ENCODE measurements at regions of chr7 and their contacts with region 1.

Region 1: GRCh38 chr7:28926871-28927597 is 31.1 kb downstream of the TRIL start:
- DNase-seq: peak in 8 of 10 donors; percentile 36 to 74 (median 57)
- H3K4me3 ChIP-seq: peak overlapping the region; percentile 32 to 84 (median 62)
- H3K27ac ChIP-seq: peak overlapping the region in 7 of 59 donors; percentile 18 to 67 (median 49)
- H3K27me3 ChIP-seq: no peaks in the 10 kb centered on the region
- CTCF ChIP-seq: peak; percentile 78 to 98 (median 91)

Region 2: DNA sequence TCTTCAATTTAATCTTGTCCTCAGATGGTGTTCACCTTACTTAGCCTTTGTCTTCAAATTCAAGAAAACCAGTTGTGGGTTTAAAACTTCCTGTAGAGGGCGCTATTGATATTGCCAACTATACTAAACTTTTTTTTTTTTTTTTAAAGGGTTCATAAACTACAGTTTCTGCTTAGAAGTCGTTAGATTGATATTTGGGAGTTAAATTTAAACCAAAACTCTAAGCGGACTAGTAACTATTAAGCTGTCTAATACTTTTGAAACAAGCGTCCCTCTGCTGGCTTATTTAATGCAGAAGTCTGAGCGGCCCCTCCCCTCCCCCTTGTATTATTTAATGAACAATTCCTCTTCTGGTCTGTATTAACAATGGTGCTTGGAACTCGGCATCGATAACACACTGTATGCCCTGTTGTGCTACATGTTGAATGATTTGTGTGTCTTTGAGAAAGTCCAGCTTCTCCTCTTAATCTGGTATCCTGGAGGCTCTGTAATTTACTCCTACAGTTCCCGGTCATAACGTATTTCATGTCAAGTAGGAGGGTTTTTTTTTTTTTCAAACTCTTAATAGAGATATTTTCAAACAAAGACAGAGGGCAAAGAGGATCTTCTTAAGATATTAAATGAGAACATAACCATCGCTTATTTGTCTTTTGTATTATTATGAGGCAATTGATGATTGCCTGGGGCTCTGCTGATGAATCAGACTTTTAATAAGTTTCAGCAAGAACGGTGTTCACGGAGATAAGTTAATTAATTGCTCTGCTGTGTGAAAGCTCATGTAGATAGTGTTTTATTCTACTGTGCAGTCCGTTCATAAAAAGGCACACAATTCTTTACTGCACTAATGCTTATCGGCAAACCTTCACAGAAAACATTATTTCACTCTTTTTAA is 537.3 kb before region 1 on chr7:
- intact Hi-C with region 1: loop called in 1 of 2 experiments (anchors 10 kb)
- DNase-seq: peak in 1 of 10 donors; percentile 33
- H3K4me3 ChIP-seq: peak overlapping the region in 58 of 59 donors; percentile 8 to 67 (median 44)
- H3K27ac ChIP-seq: peak overlapping the region in 34 of 59 donors; percentile 0 to 79 (median 52)
- H3K27me3 ChIP-seq: peaks cover 0 to 4% (median 0%) of the 10 kb centered on the region in 45 donors
- CTCF ChIP-seq: peak; percentile 73 to 92 (median 84)

Region 3: GRCh38 chr7:28442540-28443420 is 484.3 kb before region 1 on chr7:
- intact Hi-C with region 1: no loop called
- DNase-seq: no peak
- H3K4me3 ChIP-seq: no peak overlapping the region
- H3K27ac ChIP-seq: no peak overlapping the region
- H3K27me3 ChIP-seq: peaks cover 0 to 5% (median 0%) of the 10 kb centered on the region in 45 donors
- CTCF ChIP-seq: no peak

Region 4: DNA sequence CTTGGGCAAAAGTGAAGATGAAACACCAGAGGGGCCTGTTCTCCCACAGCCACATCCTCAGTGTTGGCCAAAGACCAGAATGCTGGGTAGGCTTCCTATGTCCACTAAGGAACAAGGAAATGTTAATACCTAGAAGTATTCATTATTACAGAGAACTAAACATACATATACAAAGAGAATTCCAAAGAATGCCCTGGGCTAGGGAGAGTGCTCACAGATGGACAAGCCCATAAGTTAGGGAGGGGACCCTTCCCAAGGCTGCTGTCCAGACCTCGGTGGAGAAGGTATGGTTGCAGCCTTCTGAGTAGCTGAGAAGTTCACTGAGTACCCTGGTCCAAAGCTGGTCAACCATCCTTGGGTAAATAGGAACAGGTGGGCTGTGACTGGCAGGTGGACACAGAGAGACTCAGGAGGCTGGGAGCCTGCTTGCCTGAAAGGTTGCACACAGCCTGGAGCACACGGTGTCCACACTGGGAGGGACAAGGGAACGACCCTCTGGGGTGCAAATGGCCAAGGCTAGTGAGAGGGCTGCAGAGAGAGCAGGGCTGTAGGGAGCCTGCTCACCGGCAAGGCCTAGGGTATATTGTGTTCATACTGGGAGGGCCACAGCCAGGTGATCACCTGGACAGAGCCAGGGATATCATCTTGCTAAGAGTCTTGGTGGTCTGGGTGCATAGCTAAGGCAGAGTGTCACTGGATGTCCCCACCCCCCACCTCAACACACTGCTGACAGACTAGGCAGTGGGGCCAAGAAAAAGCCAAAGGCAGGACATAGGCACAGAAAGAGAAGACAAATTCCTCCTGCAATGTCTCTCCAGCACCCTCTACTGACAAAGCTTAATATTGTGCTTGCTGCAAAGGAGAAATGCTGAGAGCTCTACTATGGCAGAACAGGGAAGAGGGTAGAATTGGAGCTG is 179.0 kb after region 1 on chr7:
- intact Hi-C with region 1: loop called (anchors 1 to 2 kb)
- DNase-seq: peak in 2 of 10 donors; percentile 34
- H3K4me3 ChIP-seq: no peak overlapping the region
- H3K27ac ChIP-seq: no peak overlapping the region
- H3K27me3 ChIP-seq: peaks cover 0 to 9% (median 0%) of the 10 kb centered on the region in 45 donors
- CTCF ChIP-seq: peak; percentile 56 to 89 (median 80)

Region 5: GRCh38 chr7:29408841-29409243 is 481.8 kb after region 1 on chr7:
- intact Hi-C with region 1: loop called (anchors 2 to 5 kb)
- DNase-seq: peak in 4 of 10 donors; percentile 24 to 83 (median 59)
- H3K4me3 ChIP-seq: no peak overlapping the region
- H3K27ac ChIP-seq: no peak overlapping the region
- H3K27me3 ChIP-seq: no peaks in the 10 kb centered on the region
- CTCF ChIP-seq: peak; percentile 84 to 99 (median 93)